CD8-positive, alpha-beta memory T cell (primary cell): ENCODE measurements at regions of chr13 and their contacts with region 1.

Region 1: DNA sequence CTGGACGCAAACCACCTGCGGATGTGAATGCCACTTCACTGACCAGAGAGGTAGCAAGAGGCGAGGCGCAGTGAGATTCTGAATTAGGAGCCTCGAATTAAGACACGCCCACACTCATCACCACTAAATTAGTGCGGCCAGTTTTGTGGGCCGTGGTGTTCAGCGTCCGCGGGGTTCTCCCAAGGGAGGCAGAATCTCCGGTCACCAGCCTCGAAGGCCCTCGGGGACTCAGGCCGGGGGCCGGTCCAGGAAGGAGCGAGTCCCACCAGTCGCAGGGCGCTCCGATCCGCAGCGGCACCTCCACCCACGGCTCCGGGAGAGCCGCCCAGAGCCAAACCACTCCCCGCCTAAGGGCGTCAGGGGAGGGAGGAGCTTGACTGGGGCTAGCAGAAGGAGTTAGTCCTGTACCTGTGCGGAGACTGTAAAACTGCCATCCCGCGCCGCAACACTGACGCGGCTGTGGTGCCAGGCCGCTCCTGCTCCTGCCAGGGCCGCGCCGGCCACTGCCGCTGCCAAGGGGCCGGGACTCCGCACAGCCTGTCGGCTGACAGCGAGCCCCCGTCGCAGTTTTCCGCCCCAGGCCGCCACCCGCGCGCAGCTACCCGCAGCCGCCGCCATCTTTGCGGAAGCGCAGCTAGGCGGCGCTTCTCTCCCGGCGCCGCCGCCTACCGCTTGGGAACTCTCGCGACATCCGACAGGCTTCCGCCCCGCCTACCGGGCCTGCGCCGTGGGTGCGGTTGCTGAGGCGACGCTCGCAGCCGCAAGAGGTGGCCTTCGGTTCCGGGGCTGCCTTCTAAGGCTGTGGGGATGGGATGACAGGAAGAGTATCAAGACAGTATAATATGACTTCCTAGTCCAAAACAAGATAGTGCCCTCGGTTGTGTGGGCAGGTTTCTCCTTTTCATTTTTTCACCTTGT is at the start of gene MICU2:
- DNase-seq: peak; percentile 91 to 98 (median 96)
- H3K4me3 ChIP-seq: peak within 1 kb of the TSS; percentile 66
- H3K4me3 Mint-ChIP-seq: peak within 1 kb of the TSS; percentile 82 to 94 (median 89)
- H3K27ac ChIP-seq: peak within 1 kb of the TSS; percentile 91
- H3K27ac Mint-ChIP-seq: peak within 1 kb of the TSS; percentile 89 to 96 (median 94)
- H3K4me1 ChIP-seq: peaks cover 18% of the 10 kb centered on the region
- H3K4me1 Mint-ChIP-seq: peaks cover 38 to 56% (median 55%) of the 10 kb centered on the region in 3 donors
- H3K27me3 ChIP-seq: no peaks in the 10 kb centered on the region
- H3K27me3 Mint-ChIP-seq: peaks cover 3 to 15% of the 10 kb centered on the region in 2 donors
- total RNA-seq, gene MICU2: 36.0 to 38.5 TPM

Region 2: DNA sequence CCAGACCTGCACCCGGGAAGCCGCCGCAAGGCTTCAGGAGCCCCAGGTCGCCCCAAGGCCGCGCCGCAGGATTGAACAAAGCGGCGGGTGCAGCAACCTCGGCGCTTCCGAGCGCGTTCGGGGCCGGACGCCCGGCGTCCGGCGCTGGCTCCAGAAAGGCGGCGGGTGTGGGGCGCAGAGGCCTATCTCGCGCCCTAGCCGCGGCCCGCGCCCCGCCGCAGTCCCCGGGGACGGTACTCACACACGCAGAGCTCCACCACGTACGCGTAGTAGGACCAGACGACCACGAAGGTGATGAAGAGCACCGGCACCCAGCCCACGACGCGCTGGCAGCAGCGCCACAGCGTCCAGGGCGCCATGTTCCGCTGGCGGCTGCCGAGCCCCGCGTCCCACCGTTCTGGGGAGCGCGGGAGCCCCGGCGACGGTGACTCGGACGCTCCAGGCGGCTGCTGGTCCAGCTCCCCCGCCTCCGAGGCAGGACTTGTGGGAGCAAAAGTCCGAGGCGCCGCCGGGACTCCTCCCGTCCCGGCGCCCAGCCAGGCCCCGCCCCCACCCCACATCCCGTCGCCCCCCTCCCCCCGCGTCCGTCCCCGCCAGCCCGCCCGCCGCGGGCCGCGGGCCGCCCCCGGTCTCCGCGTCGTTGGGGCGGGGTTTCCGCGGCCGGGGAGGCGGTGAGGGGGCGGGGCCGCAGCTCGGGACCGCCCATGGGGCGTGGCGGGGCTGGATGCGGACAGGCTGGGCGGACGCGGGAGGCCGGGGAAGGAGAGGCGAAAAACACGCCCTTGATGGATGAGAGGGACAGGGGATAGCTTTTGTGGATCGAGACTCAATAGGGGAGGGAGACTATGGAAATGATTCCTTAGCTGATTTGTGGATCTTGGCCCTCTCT is 144.7 kb before region 1 on chr13 and contains the start of gene ZDHHC20:
- CTCF ChIA-PET with region 1: no interaction called
- POLR2A ChIA-PET with region 1: interaction called, 10 read pairs
- DNase-seq: peak; percentile 84 to 91 (median 87)
- H3K4me3 ChIP-seq: peak within 1 kb of the TSS; percentile 76
- H3K4me3 Mint-ChIP-seq: peak within 1 kb of the TSS; percentile 94 to 97 (median 96)
- H3K27ac ChIP-seq: peak within 1 kb of the TSS; percentile 87
- H3K27ac Mint-ChIP-seq: peak within 1 kb of the TSS; percentile 93 to 98 (median 94)
- H3K4me1 ChIP-seq: peaks cover 28% of the 10 kb centered on the region
- H3K4me1 Mint-ChIP-seq: peaks cover 41 to 53% (median 47%) of the 10 kb centered on the region in 3 donors
- H3K27me3 ChIP-seq: no peaks in the 10 kb centered on the region
- H3K27me3 Mint-ChIP-seq: peaks cover 0 to 4% of the 10 kb centered on the region in 2 donors
- total RNA-seq, gene ZDHHC20: 50.4 to 58.8 TPM

Region 3: GRCh38 chr13:21557995-21558394 is 45.8 kb before region 1 on chr13:
- CTCF ChIA-PET with region 1: no interaction called
- POLR2A ChIA-PET with region 1: no interaction called
- DNase-seq: no peak
- H3K4me3 ChIP-seq: no peak overlapping the region
- H3K4me3 Mint-ChIP-seq: no peak overlapping the region
- H3K27ac ChIP-seq: no peak overlapping the region
- H3K27ac Mint-ChIP-seq: no peak overlapping the region
- H3K4me1 ChIP-seq: no peaks in the 10 kb centered on the region
- H3K4me1 Mint-ChIP-seq: peaks cover 16 to 39% (median 28%) of the 10 kb centered on the region in 3 donors
- H3K27me3 ChIP-seq: no peaks in the 10 kb centered on the region
- H3K27me3 Mint-ChIP-seq: no peaks in the 10 kb centered on the region

Region 4: GRCh38 chr13:21670883-21671619 is 67.3 kb after region 1 on chr13 and contains the start of gene FGF9:
- CTCF ChIA-PET with region 1: interaction called, 3 read pairs
- POLR2A ChIA-PET with region 1: interaction called, 34 read pairs
- DNase-seq: peak; percentile 74 to 87 (median 87)
- H3K4me3 ChIP-seq: peak within 1 kb of the TSS; percentile 98
- H3K4me3 Mint-ChIP-seq: peak within 1 kb of the TSS; percentile 88 to 98 (median 96)
- H3K27ac ChIP-seq: peak within 1 kb of the TSS; percentile 22
- H3K27ac Mint-ChIP-seq: peak within 1 kb of the TSS; percentile 63 to 93 (median 91)
- H3K4me1 ChIP-seq: peaks cover 38% of the 10 kb centered on the region
- H3K4me1 Mint-ChIP-seq: peaks cover 45 to 58% (median 53%) of the 10 kb centered on the region in 3 donors
- H3K27me3 ChIP-seq: peaks cover 13% of the 10 kb centered on the region
- H3K27me3 Mint-ChIP-seq: peaks cover 7 to 14% of the 10 kb centered on the region in 2 donors
- total RNA-seq, gene FGF9: 1.7 to 2.3 TPM